ENCODE measurements at regions of chr2 and their contacts with region 1.

Region 1: GRCh38 chr2:43848214-43848613 is 9.4 kb downstream of the ABCG8 start:
- DNase-seq: peak; percentile 26
- H3K27ac ChIP-seq: no peak overlapping the region
- CTCF ChIP-seq: no peak

Region 2: DNA sequence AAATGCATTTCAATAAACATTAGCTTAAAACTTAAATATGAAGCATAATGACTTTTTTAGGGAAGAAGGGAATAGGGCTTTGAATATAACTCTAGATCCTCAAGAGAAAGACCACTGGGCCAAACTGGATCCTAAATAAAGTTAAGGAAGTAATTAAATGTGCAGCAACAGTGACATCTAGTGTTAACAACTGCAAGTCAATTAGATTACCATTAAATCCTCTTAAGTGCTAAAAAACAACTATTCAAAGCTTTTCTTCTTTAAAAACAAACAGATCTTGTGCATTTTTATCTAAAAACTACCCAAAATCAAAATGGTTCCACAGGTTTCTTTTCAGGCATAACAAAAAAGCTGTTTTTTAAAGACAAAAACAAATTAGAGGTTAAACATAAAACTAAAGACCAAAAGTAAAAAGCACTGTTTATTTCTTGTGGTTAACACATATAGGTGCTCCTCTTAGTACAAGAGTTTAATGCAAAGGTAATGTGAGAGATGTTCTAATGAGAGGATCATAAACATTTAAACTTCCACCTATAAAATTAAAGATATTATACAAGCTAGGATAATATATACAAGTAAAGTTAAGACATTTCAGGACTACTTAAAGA is 363.8 kb before region 1 on chr2:
- CTCF ChIA-PET with region 1: interaction called, 12 read pairs
- POLR2A ChIA-PET with region 1: no interaction called
- DNase-seq: peak; percentile 27
- H3K27ac ChIP-seq: no peak overlapping the region
- CTCF ChIP-seq: peak; percentile 70

Region 3: GRCh38 chr2:43759195-43759594 is 89.0 kb before region 1 on chr2:
- CTCF ChIA-PET with region 1: no interaction called
- POLR2A ChIA-PET with region 1: no interaction called
- DNase-seq: peak; percentile 48
- H3K27ac ChIP-seq: no peak overlapping the region
- CTCF ChIP-seq: no peak

Region 4: DNA sequence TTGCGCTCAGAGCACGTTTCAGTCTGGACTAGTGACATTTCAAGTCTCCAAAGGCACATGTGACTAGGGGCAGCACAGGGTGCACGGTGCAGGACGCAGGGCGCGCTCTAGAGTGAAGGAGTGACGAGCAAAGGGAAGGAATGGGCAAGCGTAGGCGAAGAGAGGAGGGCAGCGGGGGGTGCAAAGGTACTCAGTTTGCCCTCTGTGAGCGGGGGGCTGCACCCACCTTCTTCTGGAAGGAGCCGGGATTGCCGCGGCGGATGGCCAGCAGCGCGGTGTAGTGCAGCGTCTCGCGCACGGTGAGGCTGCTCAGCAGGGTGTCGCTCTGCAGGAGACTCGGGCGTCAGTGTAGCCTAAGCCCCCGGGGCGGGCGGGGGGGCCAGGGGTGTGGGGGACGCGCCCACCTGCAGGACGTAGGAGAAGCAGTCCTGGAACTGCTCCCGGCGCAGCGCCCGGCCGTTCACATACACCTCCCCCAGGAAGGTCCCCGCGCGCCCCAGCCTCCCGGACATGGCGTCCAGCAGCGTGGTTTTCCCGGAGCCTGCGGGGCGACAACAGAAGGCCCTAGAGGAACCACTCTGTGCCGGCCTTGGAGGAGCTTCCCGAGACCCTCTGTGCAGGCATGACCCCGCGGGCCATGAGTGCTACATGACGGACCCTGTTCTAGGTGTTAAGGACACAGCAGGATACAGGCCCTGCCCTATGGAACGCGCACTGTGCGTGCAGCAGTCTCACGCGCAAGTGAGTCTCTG is 16.5 kb before region 1 on chr2:
- CTCF ChIA-PET with region 1: no interaction called
- POLR2A ChIA-PET with region 1: no interaction called
- DNase-seq: no peak
- H3K27ac ChIP-seq: no peak overlapping the region
- CTCF ChIP-seq: no peak

Measured in RWPE1 (cell line).